HepG2 (cell line): ENCODE measurements at regions of chr5 and their contacts with region 1.

Region 1: GRCh38 chr5:42767491-42768105 is 11.0 kb downstream of the CCDC152 start:
- DNase-seq: peak; percentile 19
- ATAC-seq: peak; percentile 57
- H3K4me3 ChIP-seq: no peak overlapping the region
- H3K27ac ChIP-seq: no peak overlapping the region
- H3K4me1 ChIP-seq: peaks cover 8% of the 10 kb centered on the region
- H3K27me3 ChIP-seq: 0 out of 5 replicates have a peak, but pooled peaks cover 0 to 9% of the 10 kb centered on the region in 2 experiments
- CTCF ChIP-seq: peak; percentile 64
- EP300 ChIP-seq: no peak
- POLR2A ChIP-seq: no peak
- RAD21 ChIP-seq: peak; percentile 29; the same call in 1 of the 2 replicates

Region 2: DNA sequence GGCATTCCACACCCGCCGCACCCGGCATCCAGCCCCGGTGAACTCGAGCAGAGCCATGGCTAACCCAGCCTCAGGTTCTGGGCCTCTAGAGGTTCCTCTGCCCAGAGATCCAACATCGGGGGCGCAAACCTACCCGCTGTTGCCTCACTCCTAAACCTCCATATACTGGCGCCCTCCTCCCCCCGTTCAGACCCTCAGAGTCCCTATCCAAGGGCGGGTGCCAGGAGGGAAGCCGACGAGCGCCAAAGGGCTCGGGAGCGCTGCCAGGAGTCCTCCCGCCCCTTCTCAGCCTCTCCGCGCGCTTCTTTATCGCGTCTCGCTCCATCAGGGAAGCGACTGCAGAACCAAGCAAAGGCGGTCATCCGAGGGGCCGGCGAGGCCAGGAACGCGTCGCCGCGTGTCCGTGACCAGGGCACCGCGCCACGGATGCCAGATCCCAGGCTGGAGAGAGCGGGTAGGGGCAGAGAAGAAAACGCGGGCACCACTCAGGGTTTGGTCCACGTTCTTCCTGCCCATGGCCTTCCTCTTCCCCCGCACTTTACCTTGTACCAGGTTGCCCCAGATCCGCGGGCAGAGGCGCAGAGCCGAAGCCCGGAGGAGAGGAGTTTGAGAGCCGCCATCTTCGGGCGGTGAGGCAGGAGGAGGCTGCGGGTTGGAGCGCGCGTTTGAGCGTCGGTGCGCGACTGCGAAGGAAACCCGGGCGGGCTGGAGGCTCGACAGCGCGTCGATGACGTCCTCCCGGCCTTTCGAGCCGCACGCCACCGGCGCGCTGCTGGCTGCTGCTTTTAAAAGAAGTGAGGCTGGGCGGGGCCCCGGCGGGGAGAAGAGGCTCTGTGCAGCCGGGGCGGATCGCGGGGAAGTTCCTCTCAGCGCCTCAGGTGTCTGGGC is 897.6 kb before region 1 on chr5 and contains the start of gene OXCT1:
- CTCF ChIA-PET with region 1: no interaction called
- POLR2A ChIA-PET with region 1: no interaction called
- in situ Hi-C with region 1: loop called (anchors 25 kb)
- intact Hi-C with region 1: no loop called
- DNase-seq: peak; percentile 10
- ATAC-seq: peak; percentile 85
- H3K4me3 ChIP-seq: peak within 1 kb of the TSS; percentile 22 to 68 (median 54); a peak in 5 of 6 replicates
- H3K27ac ChIP-seq: no peak within 1 kb of the TSS
- H3K4me1 ChIP-seq: peaks cover 8% of the 10 kb centered on the region; the same call in 1 of the 2 replicates
- H3K27me3 ChIP-seq: peaks cover 0 to 8% of the 10 kb centered on the region in 2 experiments; a peak in 2 of 5 replicates
- CTCF ChIP-seq: no peak
- EP300 ChIP-seq: no peak
- POLR2A ChIP-seq: no peak
- RAD21 ChIP-seq: no peak
- total RNA-seq, gene OXCT1: 3.7 and 4.7 TPM in 2 replicates

Region 3: GRCh38 chr5:42057254-42057690 is 710.3 kb before region 1 on chr5:
- CTCF ChIA-PET with region 1: no interaction called
- POLR2A ChIA-PET with region 1: no interaction called
- in situ Hi-C with region 1: no loop called
- intact Hi-C with region 1: loop called (anchors 5 kb)
- DNase-seq: peak; percentile 28
- ATAC-seq: peak; percentile 93
- H3K4me3 ChIP-seq: no peak overlapping the region
- H3K27ac ChIP-seq: no peak overlapping the region
- H3K4me1 ChIP-seq: no peaks in the 10 kb centered on the region
- H3K27me3 ChIP-seq: no peaks in the 10 kb centered on the region
- CTCF ChIP-seq: peak; percentile 81
- EP300 ChIP-seq: no peak
- POLR2A ChIP-seq: no peak
- RAD21 ChIP-seq: peak; percentile 61; the same call in 1 of the 2 replicates

Region 4: GRCh38 chr5:42423285-42424165 is 344.1 kb before region 1 on chr5 and contains the start of gene GHR:
- CTCF ChIA-PET with region 1: no interaction called
- POLR2A ChIA-PET with region 1: no interaction called
- in situ Hi-C with region 1: no loop called
- intact Hi-C with region 1: loop called (anchors 1 kb)
- DNase-seq: peak; percentile 72
- ATAC-seq: peak; percentile 96
- H3K4me3 ChIP-seq: peak within 1 kb of the TSS; percentile 49 to 71 (median 52); a peak in 5 of 6 replicates
- H3K27ac ChIP-seq: no peak within 1 kb of the TSS
- H3K4me1 ChIP-seq: peaks cover 12% of the 10 kb centered on the region
- H3K27me3 ChIP-seq: peaks cover 0 to 24% of the 10 kb centered on the region in 2 experiments; a peak in 3 of 5 replicates
- CTCF ChIP-seq: peak; percentile 85
- EP300 ChIP-seq: no peak
- POLR2A ChIP-seq: no peak
- RAD21 ChIP-seq: peak; percentile 68
- total RNA-seq, gene GHR: not detected in 2 replicates

Region 5: GRCh38 chr5:42889311-42889933 is 121.8 kb after region 1 on chr5:
- CTCF ChIA-PET with region 1: interaction called, 10 read pairs
- POLR2A ChIA-PET with region 1: no interaction called
- in situ Hi-C with region 1: no loop called
- intact Hi-C with region 1: loop called (anchors 1 kb)
- DNase-seq: peak; percentile 82
- ATAC-seq: peak; percentile 95
- H3K4me3 ChIP-seq: no peak overlapping the region
- H3K27ac ChIP-seq: no peak overlapping the region
- H3K4me1 ChIP-seq: peaks cover 49% of the 10 kb centered on the region
- H3K27me3 ChIP-seq: no peaks in the 10 kb centered on the region
- CTCF ChIP-seq: peak; percentile 91
- EP300 ChIP-seq: no peak
- POLR2A ChIP-seq: no peak
- RAD21 ChIP-seq: peak; percentile 83